ENCODE measurements at regions of chr7 and their contacts with region 1.

Region 1: GRCh38 chr7:138738551-138739335 is 37.6 kb upstream of the SVOPL start:
- DNase-seq: peak; percentile 73 to 86
- H3K4me3 ChIP-seq: no peak overlapping the region
- H3K27ac ChIP-seq: no peak overlapping the region
- H3K4me1 ChIP-seq: peaks cover 10% of the 10 kb centered on the region
- H3K27me3 ChIP-seq: no peaks in the 10 kb centered on the region
- CTCF ChIP-seq: peak; percentile 99

Region 2: DNA sequence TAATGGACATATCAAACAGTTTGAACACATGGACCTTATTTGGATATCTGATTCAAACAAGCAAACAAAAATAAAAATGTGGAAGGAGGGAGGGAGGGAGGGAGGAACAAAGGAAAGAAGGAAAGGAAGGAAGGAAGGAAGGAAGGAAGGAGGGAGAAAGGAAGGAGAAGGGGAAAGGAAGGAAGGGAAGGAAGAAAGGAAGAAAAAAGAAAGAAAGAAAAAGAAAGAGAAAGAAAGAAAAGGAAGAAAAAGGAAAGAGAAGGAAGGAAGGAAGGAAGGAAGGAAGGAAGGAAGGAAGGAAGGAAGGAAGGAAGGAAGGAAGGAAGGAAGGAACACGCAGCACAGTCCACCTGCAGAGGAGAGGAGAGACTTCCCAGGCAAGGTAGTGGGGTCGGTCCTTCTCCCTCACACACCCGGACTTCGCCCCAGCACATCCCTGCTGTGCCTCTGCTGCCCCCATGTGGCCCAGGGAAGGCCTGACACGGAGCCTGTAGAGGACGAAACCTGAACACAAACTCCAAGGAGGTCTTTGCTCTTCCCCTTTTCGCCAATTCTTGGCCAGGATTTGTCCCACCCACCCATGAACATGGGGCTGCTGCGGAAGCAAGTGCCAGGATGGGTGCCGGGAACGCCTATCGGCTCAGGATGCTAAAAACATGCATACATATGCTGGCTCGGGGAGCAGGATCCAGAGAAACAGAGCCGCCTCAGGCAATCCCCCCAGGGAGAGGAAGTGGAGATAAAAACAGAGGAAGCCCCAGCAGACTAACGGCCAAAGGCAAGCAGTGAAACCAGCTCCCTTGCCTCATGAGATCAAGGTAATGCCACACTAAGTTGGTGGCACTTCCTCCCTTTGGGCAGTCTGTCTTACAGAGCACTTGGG is 839.7 kb before region 1 on chr7:
- CTCF ChIA-PET with region 1: no interaction called
- POLR2A ChIA-PET with region 1: no interaction called
- intact Hi-C with region 1: loop called (anchors 1 kb)
- DNase-seq: peak; percentile 54 to 78
- H3K4me3 ChIP-seq: no peak overlapping the region
- H3K27ac ChIP-seq: no peak overlapping the region
- H3K4me1 ChIP-seq: no peaks in the 10 kb centered on the region
- H3K27me3 ChIP-seq: no peaks in the 10 kb centered on the region
- CTCF ChIP-seq: peak; percentile 95

Region 3: GRCh38 chr7:138161600-138162081 is 577.1 kb before region 1 on chr7:
- CTCF ChIA-PET with region 1: interaction called, 15 read pairs
- POLR2A ChIA-PET with region 1: no interaction called
- intact Hi-C with region 1: loop called (anchors 1 kb)
- DNase-seq: peak; percentile 78 to 81
- H3K4me3 ChIP-seq: no peak overlapping the region
- H3K27ac ChIP-seq: no peak overlapping the region
- H3K4me1 ChIP-seq: 0 out of 2 replicates have a peak, but pooled peaks cover 9% of the 10 kb centered on the region
- H3K27me3 ChIP-seq: no peaks in the 10 kb centered on the region
- CTCF ChIP-seq: peak; percentile 89

Region 4: DNA sequence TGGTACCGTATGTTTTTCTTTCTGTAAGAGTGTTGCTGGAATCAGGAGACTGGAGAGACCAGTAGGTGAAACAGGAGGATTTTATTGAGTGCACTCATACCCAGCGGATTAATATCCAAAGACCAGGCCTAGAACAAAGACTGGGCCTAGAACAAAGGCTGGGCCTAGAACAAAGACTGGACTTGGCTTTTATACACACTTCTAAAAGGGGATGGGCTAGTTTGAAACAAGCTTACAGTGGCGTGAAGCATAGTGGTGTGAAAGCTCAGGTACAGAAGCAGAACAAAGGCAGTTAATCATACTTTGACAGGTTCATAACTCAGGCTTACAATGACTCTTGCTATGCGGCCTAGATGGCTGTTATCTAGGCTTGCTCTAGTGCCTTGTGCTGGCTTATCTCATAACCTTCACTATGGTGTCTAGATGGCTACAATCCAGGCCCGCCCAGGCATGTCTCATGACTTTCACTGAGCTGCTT is 211.0 kb before region 1 on chr7:
- CTCF ChIA-PET with region 1: no interaction called
- POLR2A ChIA-PET with region 1: no interaction called
- intact Hi-C with region 1: no loop called
- DNase-seq: no peak
- H3K4me3 ChIP-seq: no peak overlapping the region
- H3K27ac ChIP-seq: no peak overlapping the region
- H3K4me1 ChIP-seq: no peaks in the 10 kb centered on the region
- H3K27me3 ChIP-seq: no peaks in the 10 kb centered on the region
- CTCF ChIP-seq: no peak

Region 5: GRCh38 chr7:138565451-138566114 is 173.2 kb before region 1 on chr7:
- CTCF ChIA-PET with region 1: no interaction called
- POLR2A ChIA-PET with region 1: no interaction called
- intact Hi-C with region 1: loop called (anchors 5 kb)
- DNase-seq: peak in 1 of 2 experiments; percentile 43
- H3K4me3 ChIP-seq: 0 out of 2 replicates have a peak overlapping the region, but pooled peaks have one; percentile 18
- H3K27ac ChIP-seq: no peak overlapping the region
- H3K4me1 ChIP-seq: peaks cover 18% of the 10 kb centered on the region
- H3K27me3 ChIP-seq: no peaks in the 10 kb centered on the region
- CTCF ChIP-seq: no peak

Region 6: DNA sequence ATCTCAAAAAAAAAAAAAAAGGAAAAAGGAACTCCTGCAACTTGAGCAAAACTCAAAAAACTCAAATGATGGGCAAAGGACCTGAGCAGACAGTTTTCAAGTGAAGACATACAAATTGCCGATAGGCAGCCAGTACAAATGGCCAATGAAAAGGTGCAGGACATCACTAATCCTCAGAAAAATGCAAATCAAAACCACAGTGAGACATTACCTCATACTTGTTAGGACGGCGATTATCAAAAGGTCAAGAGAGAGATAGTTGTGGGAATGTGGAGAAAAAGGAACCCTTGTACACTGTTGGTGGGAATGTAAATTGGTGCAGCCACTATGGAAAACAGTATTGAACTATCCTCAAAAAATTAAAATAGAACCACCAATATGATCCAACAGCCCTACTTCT is 54.4 kb before region 1 on chr7:
- CTCF ChIA-PET with region 1: no interaction called
- POLR2A ChIA-PET with region 1: no interaction called
- intact Hi-C with region 1: no loop called
- DNase-seq: no peak
- H3K4me3 ChIP-seq: no peak overlapping the region
- H3K27ac ChIP-seq: no peak overlapping the region
- H3K4me1 ChIP-seq: no peaks in the 10 kb centered on the region
- H3K27me3 ChIP-seq: no peaks in the 10 kb centered on the region
- CTCF ChIP-seq: no peak

Region 7: DNA sequence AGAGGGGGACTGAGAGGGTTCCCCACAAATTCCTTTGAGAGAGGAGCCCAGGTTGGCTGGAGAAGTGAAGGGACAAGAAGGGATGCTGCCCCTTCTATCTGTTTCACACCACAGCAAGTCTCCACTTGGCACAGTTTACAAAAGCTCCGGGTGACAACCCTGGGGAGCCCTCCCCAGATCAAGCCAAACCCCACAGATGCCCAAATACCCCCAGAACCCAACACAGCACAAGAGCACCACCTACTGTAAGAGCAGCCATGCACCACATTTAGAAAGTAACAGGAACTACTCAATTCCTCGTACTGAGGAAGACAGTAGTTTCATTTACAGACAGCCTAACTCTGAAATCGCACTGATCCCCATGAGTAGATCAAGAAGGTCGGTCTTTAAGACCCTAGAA is 127.1 kb after region 1 on chr7:
- CTCF ChIA-PET with region 1: no interaction called
- POLR2A ChIA-PET with region 1: no interaction called
- intact Hi-C with region 1: loop called (anchors 2 kb)
- DNase-seq: peak in 1 of 2 experiments; percentile 51
- H3K4me3 ChIP-seq: no peak overlapping the region
- H3K27ac ChIP-seq: no peak overlapping the region
- H3K4me1 ChIP-seq: peaks cover 28% of the 10 kb centered on the region
- H3K27me3 ChIP-seq: no peaks in the 10 kb centered on the region
- CTCF ChIP-seq: peak; percentile 80

Measured in PC-9 (cell line).